Sigmoid colon (tissue), 7 donors: ENCODE measurements at regions of chr1 and their contacts with region 1.

Region 1: DNA sequence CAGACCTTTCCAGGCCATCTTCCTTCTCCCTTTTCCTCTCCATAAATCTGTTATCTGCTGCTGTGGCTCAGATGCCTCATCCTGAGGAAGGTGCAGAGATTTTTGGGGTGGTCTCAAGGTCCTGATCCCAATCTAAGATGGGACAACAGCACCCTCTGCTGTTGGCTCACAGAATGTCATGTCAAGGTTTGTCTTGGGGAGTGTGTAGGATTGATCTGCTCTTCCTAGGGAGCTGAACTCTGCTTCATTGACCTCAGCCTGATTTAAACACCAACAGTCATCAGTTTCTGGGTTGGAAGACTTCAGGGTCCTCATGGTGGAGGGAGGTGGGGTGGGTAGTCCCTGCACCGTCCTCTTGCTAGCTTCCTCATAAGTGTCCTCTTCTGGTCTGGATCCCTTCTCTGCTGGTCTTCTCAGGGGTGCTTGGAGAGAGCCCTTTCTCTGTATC is 62.8 kb upstream of the LAX1 start:
- DNase-seq: peak; percentile 76
- H3K4me3 ChIP-seq: no peak overlapping the region
- H3K27ac ChIP-seq: peak overlapping the region; percentile 87 to 93 (median 88)
- H3K4me1 ChIP-seq: peaks cover 0 to 77% (median 65%) of the 10 kb centered on the region in 4 donors
- H3K27me3 ChIP-seq: no peaks in the 10 kb centered on the region
- CTCF ChIP-seq: peak; percentile 78 to 97 (median 94)
- EP300 ChIP-seq: no peak
- POLR2A ChIP-seq: no peak

Region 2: DNA sequence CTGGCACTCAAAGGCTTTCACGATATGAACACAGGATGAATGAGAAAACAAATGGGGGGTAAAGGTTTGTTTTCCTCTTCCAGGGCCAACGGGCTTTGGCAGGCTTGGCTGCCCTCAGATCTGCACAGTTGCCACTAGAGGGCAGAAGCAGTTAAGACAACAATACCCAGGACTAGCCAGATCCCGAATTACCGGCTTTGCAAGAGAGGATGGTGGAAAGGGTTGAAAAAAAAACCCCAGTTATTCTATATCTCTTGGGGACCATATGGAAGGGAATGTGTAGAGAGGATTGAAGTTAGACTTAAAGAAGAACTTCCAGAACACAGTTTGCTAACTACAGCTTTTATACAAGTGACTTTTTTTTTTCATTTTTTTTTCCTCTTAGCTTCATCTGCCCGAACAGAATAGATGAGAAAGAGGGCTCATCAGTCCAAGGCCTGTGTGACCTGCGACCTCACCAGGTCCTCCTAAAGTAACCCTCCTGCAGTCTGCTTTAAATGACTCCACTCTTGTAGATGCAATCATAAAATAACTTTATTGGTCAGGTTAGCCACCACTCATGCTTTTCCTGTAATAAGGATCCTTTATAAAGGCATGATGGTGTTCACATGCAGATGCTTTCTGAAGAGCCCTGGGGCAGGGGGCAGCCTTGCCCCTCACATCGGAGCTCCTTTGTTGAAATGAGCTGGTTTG is 361.9 kb before region 1 on chr1:
- intact Hi-C with region 1: loop called (anchors 10 kb)
- DNase-seq: peak; percentile 89
- H3K4me3 ChIP-seq: no peak overlapping the region
- H3K27ac ChIP-seq: no peak overlapping the region
- H3K4me1 ChIP-seq: peaks cover 0 to 15% (median 7%) of the 10 kb centered on the region in 4 donors
- H3K27me3 ChIP-seq: no peaks in the 10 kb centered on the region
- CTCF ChIP-seq: peak; percentile 82 to 90 (median 86)
- EP300 ChIP-seq: no peak
- POLR2A ChIP-seq: no peak

Region 3: DNA sequence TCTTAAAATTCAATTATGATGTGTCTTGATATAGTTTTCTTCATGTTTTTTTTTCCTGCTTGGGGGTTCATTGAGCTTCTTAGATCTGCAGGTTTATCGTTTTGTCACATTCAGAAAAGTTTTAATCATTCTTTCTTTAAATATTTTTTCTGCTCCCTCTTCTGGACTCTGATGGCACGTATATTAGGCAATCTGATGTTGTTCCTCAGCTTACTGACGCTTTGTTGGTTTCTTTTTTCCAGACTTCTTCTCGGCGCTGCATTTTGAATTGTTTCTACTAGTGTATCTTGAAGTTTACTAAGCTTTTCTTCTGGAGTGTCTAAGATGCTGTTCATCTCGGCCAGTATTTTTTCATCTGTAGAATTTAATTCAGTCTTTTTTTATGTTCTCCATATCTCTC is 306.4 kb before region 1 on chr1:
- intact Hi-C with region 1: no loop called
- DNase-seq: no peak
- H3K4me3 ChIP-seq: no peak overlapping the region
- H3K27ac ChIP-seq: no peak overlapping the region
- H3K4me1 ChIP-seq: peaks cover 0 to 4% (median 0%) of the 10 kb centered on the region in 4 donors
- H3K27me3 ChIP-seq: no peaks in the 10 kb centered on the region
- CTCF ChIP-seq: no peak
- EP300 ChIP-seq: no peak
- POLR2A ChIP-seq: no peak

Region 4: DNA sequence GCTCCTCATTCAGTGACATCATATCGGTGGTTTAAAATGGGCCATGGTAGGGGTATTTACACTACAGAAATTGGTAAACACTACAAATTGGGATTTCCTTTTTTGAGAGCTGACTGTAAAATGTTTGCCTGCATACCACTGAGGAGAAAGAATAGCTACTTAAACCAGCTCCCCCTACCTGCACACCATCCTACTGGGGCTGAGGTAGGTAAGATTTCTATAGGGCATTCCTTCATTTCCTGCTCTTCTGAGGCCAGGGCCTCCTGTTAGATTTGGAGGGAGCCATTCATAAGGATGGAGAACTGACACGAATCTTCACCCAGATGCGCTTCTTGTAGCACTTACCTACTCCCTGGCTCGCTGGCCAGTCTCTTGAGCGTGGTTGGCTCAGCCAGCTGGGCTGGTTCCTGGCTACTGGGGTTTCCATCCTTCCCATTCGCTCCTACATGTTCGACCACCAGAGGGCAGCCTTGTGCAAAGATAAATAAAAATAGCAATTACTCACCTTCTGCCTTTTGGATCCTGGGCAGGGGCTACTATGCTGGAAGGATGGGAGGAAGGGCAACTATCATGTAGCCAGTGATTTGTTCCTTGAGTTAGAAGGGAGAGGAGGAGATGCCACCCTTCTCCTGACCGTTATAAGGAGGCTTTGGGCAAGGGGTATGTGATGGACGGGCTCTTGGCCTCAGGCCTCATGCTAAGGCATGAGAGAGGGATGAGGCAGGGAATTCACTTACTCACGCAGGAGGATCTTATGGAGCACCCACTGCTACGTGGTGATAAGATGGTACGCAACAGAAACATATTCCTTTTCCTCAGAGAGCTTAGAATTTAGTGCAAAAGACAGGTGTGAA is 197.5 kb before region 1 on chr1:
- intact Hi-C with region 1: loop called (anchors 1 kb)
- DNase-seq: peak; percentile 94
- H3K4me3 ChIP-seq: no peak overlapping the region
- H3K27ac ChIP-seq: peak overlapping the region; percentile 7 to 94 (median 86)
- H3K4me1 ChIP-seq: peaks cover 3 to 79% (median 64%) of the 10 kb centered on the region in 4 donors
- H3K27me3 ChIP-seq: no peaks in the 10 kb centered on the region
- CTCF ChIP-seq: peak; percentile 56 to 87 (median 84)
- EP300 ChIP-seq: no peak
- POLR2A ChIP-seq: no peak

Region 5: GRCh38 chr1:203558064-203558760 is 143.9 kb before region 1 on chr1:
- intact Hi-C with region 1: loop called (anchors 2 kb)
- DNase-seq: peak; percentile 91
- H3K4me3 ChIP-seq: no peak overlapping the region
- H3K27ac ChIP-seq: peak overlapping the region; percentile 89 to 97 (median 92)
- H3K4me1 ChIP-seq: peaks cover 0 to 65% (median 63%) of the 10 kb centered on the region in 4 donors
- H3K27me3 ChIP-seq: no peaks in the 10 kb centered on the region
- CTCF ChIP-seq: no peak
- EP300 ChIP-seq: peak; percentile 80 to 99 (median 86)
- POLR2A ChIP-seq: no peak

Region 6: GRCh38 chr1:203673550-203674427 is 28.4 kb before region 1 on chr1:
- intact Hi-C with region 1: loop called (anchors 2 kb)
- DNase-seq: peak; percentile 82
- H3K4me3 ChIP-seq: no peak overlapping the region
- H3K27ac ChIP-seq: peak overlapping the region; percentile 83 to 98 (median 88)
- H3K4me1 ChIP-seq: peaks cover 0 to 99% (median 99%) of the 10 kb centered on the region in 4 donors
- H3K27me3 ChIP-seq: no peaks in the 10 kb centered on the region
- CTCF ChIP-seq: no peak
- EP300 ChIP-seq: no peak
- POLR2A ChIP-seq: no peak

Region 7: DNA sequence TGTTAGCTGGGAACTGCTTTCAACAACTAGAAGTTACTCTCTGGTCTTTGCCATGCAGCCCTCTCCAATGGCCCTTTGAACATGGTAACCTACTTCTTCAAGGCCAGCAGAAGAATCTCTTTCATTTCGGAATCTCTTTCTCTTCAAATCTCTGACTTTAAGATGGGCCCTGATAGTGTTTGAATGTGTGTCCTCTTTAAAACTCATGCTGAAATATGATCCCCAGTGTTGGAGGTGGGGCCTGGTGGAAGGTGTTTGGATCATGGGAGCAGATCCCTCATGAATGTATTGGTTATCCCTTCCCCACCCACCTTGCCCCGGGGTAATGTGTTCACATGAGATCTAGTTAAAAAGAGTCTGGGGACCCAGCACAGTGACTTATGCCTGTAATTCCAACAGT is 316.3 kb after region 1 on chr1:
- intact Hi-C with region 1: no loop called
- DNase-seq: no peak
- H3K4me3 ChIP-seq: no peak overlapping the region
- H3K27ac ChIP-seq: no peak overlapping the region
- H3K4me1 ChIP-seq: no peaks in the 10 kb centered on the region
- H3K27me3 ChIP-seq: no peaks in the 10 kb centered on the region
- CTCF ChIP-seq: no peak
- EP300 ChIP-seq: no peak
- POLR2A ChIP-seq: no peak